Activated CD4-positive, alpha-beta memory T cell treated with anti-CD3 and anti-CD28 coated beads for 36 hours (primary cell): ENCODE measurements at regions of chr6 and their contacts with region 1.

Region 1: DNA sequence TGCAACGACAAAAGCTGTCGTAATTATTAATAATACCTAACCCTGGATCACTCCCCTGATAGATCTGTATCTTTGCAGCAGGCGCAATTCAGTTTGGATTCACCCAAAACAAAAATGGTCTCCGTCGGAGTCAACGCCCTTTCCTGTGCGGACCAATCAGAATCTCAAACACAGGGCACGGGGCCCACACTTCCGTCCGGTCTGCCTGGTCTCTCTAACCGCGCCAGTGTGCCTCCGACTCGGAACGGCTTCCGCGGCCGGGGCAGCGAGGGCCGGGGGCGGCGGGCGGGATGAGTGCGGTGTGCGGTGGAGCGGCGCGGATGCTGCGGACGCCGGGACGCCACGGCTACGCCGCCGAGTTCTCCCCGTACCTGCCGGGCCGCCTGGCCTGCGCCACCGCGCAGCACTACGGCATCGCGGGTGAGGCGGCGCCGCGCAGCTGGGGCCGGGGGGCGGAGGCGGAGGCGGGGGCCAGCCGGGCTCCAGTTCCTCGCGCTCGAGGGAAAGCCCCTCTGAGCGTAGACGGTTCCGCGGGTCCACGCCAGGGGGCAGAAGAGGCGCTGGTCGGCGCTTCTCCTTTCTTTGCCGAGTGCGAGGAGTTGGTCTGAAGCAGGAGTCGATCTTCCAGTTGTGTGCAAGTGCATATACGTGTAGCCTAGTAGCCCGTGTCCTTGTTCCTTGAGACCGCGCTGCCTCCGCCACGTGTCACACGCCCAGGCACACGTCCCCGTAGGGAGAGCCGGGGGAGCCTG is at the start of gene PEX7:
- DNase-seq: peak; percentile 93
- H3K4me3 Mint-ChIP-seq: peak within 1 kb of the TSS; percentile 93
- H3K27ac Mint-ChIP-seq: peak within 1 kb of the TSS; percentile 95
- H3K4me1 Mint-ChIP-seq: peaks cover 17% of the 10 kb centered on the region
- H3K27me3 Mint-ChIP-seq: no peaks in the 10 kb centered on the region
- total RNA-seq, gene PEX7: 5.4 to 6.4 TPM

Region 2: DNA sequence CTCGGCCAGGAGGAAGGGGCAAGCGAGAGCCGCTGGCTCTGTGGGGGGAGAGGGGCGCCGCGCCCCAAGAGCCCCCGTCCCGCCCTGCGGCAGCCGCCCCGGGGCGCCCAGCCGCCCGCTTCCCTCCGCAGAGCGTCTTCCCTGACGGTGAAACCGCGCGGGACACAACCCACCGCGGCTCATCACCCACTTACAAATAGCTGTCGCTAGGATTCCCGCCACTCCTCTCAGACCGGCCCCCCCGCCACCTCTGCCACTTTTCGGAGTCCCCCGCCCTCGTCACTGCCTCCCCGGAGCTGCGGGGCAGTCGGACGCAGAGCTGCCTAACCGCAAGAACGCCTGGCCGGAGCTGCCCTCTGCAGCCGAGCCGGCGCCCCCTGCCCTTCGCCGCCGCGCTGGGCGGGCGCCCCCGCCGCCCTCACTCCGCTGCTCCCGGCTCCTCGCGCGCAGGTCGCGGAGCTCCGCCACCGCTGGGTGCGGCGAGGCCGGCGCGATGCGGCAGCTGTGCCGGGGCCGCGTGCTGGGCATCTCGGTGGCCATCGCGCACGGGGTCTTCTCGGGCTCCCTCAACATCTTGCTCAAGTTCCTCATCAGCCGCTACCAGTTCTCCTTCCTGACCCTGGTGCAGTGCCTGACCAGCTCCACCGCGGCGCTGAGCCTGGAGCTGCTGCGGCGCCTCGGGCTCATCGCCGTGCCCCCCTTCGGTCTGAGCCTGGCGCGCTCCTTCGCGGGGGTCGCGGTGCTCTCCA is 99.6 kb after region 1 on chr6 and contains the start of gene SLC35D3:
- CTCF ChIA-PET with region 1: no interaction called
- POLR2A ChIA-PET with region 1: no interaction called
- intact Hi-C with region 1: loop called (anchors 2 kb)
- DNase-seq: peak; percentile 32
- H3K4me3 Mint-ChIP-seq: peak within 1 kb of the TSS; percentile 69
- H3K27ac Mint-ChIP-seq: no peak within 1 kb of the TSS
- H3K4me1 Mint-ChIP-seq: peaks cover 23% of the 10 kb centered on the region
- H3K27me3 Mint-ChIP-seq: peaks cover 46% of the 10 kb centered on the region
- total RNA-seq, gene SLC35D3: not detected